MCF 10A (cell line): ENCODE measurements at regions of chr16 and their contacts with region 1.

Region 1: DNA sequence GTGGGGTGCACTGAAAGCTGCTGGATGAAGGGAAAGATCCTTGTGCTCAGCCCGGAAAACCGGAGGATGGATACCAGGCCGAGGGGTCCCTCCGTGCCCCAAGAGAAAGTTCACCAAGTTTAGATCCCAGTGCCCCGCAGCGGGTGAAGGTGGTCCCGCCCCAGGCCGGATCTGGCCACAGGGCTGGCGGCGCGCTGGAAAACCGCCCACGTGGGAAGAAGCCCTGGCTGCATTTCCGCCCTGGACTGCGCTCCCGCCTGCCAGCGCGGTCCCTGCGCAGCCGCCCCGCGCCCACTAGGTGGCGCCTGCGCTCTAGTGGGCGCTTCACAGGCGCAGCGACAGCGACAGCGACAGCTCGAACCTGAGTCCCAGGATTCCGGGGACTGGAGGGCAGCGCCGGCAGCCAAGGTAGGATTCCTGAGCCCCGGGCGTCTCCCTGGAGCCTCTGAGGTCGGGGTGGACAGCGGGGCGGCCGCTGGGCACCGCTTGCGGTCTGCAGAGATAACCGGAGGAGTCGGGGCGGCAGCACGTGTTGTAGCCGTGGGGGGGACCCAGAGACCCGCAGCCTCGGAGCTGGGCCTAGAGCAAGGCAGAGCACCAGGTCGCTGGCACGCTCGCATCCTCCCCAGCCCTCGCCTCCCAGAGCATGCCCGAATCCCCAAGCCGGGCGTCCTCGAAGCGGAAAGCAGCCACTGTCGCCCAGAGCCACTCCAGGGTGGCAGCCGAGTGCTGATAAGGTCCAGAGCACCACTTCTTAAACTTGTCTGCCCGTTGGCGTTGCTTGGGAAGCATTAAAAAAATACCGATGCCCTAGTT is at the start of gene CHD9:
- DNase-seq: peak; percentile 84
- H3K4me3 Mint-ChIP-seq: peak within 1 kb of the TSS; percentile 86
- H3K27ac Mint-ChIP-seq: peak within 1 kb of the TSS; percentile 83
- H3K4me1 Mint-ChIP-seq: peaks cover 46% of the 10 kb centered on the region
- H3K27me3 Mint-ChIP-seq: no peaks in the 10 kb centered on the region
- CTCF ChIP-seq: peak; percentile 98
- total RNA-seq, gene CHD9: 62.8 and 62.9 TPM in 2 replicates

Region 2: GRCh38 chr16:53007095-53007494 is 47.8 kb before region 1 on chr16:
- CTCF ChIA-PET with region 1: no interaction called
- POLR2A ChIA-PET with region 1: no interaction called
- intact Hi-C with region 1: no loop called
- DNase-seq: no peak
- H3K4me3 Mint-ChIP-seq: no peak overlapping the region
- H3K27ac Mint-ChIP-seq: no peak overlapping the region
- H3K4me1 Mint-ChIP-seq: no peaks in the 10 kb centered on the region
- H3K27me3 Mint-ChIP-seq: no peaks in the 10 kb centered on the region
- CTCF ChIP-seq: no peak

Region 3: GRCh38 chr16:53022374-53022773 is 32.5 kb before region 1 on chr16:
- CTCF ChIA-PET with region 1: interaction called, 3 read pairs
- POLR2A ChIA-PET with region 1: no interaction called
- intact Hi-C with region 1: loop called (anchors 1 kb)
- DNase-seq: peak; percentile 65
- H3K4me3 Mint-ChIP-seq: no peak overlapping the region
- H3K27ac Mint-ChIP-seq: no peak overlapping the region
- H3K4me1 Mint-ChIP-seq: peaks cover 7% of the 10 kb centered on the region
- H3K27me3 Mint-ChIP-seq: no peaks in the 10 kb centered on the region
- CTCF ChIP-seq: peak; percentile 74

Region 4: GRCh38 chr16:53080345-53081031 is 25.6 kb after region 1 on chr16:
- CTCF ChIA-PET with region 1: interaction called, 34 read pairs
- POLR2A ChIA-PET with region 1: interaction called, 66 read pairs
- intact Hi-C with region 1: loop called (anchors 1 kb)
- DNase-seq: peak; percentile 87
- H3K4me3 Mint-ChIP-seq: peak overlapping the region; percentile 64
- H3K27ac Mint-ChIP-seq: peak overlapping the region; percentile 84
- H3K4me1 Mint-ChIP-seq: peaks cover 63% of the 10 kb centered on the region
- H3K27me3 Mint-ChIP-seq: no peaks in the 10 kb centered on the region
- CTCF ChIP-seq: no peak

Region 5: DNA sequence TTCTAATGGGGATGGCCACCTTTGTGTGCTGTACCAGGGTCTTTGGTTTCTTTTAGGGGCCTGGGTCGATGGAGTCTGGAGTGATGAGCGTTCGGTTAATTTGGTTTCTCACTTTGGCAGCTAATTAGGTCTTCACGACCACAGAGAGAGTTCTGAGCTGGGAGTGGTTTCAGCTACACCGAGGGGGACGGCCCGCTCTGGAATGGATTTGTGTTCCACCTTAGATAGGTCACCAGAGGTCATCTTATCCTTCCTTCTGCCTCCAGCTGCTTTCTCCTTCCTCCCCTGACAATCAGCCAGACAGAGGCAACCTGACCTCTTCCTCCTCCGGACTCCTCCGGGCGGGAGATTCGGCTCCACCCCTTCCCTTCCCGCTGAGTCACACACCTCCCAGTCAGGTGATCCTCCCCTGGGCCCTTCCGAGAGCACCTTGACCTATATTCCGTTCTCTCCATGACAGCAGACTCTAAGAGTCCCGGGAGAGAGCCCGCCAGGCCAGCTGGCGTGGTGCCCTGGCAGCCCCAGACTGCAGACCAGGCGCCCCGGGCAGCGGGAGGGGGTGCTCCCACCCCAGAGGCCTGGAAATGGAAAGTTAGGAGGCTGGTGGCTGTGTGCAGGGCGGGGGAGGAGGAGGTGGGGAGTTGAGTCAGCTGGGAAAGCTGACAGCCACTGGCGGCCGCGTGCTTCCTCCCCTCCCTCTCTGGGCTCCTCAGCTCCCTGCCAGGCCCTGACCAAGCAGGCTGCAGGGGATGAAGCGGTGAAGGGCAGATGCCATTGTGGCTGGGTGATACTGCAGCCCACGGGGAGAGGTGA is 44.6 kb after region 1 on chr16:
- CTCF ChIA-PET with region 1: interaction called, 27 read pairs
- POLR2A ChIA-PET with region 1: interaction called, 61 read pairs
- intact Hi-C with region 1: loop called (anchors 1 kb)
- DNase-seq: peak; percentile 97
- H3K4me3 Mint-ChIP-seq: peak overlapping the region; percentile 68
- H3K27ac Mint-ChIP-seq: peak overlapping the region; percentile 96
- H3K4me1 Mint-ChIP-seq: peaks cover 30% of the 10 kb centered on the region
- H3K27me3 Mint-ChIP-seq: no peaks in the 10 kb centered on the region
- CTCF ChIP-seq: no peak

Region 6: GRCh38 chr16:53159781-53160436 is 105.0 kb after region 1 on chr16:
- CTCF ChIA-PET with region 1: interaction called, 22 read pairs
- POLR2A ChIA-PET with region 1: interaction called, 7 read pairs
- intact Hi-C with region 1: loop called (anchors 1 kb)
- DNase-seq: peak; percentile 65
- H3K4me3 Mint-ChIP-seq: no peak overlapping the region
- H3K27ac Mint-ChIP-seq: no peak overlapping the region
- H3K4me1 Mint-ChIP-seq: peaks cover 11% of the 10 kb centered on the region
- H3K27me3 Mint-ChIP-seq: no peaks in the 10 kb centered on the region
- CTCF ChIP-seq: peak; percentile 54

Region 7: DNA sequence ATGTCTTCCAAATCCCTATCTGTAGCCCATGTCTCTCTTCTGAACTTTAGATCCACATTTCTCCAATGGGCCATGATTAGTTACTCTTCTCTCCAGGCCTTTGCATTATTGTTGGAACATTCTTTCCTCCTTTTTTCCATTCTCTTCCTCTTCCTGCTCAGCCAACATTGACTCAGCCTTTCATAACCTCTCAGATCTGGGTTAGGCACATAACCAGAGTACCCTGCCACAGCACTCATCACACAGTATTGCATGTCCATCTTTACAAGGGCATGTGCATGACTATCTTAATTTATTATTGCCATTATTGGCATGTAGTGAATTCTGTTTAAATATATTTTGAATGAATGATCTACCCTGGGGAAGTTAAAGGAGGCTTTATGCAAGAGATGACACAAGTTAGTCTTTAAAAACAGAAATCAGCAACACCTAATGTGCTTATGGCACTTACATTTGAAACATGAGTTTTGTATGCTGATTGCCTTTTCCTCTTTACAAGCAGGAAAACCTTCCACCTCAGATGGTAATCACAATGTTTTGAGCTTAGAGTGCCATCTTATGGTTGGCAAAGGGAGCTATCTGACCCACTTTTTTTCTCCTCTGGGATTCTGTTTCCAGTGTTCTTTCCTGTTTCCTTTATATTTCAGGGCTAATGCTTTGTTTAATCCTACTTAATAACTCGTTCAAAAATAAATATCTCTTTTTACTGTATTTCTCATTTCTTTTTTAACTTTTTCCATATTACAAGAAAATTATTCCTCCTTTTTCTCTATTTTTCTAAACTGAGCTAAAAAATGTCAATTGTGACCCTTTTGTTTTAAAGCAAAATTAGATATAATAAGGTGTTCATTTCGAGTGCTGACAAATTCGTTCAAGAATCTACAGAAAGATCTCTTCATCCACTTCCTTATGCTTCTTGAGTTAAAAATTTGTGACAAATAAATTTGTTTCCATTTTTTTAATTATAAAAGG is 228.4 kb after region 1 on chr16:
- CTCF ChIA-PET with region 1: interaction called, 3 read pairs
- POLR2A ChIA-PET with region 1: no interaction called
- intact Hi-C with region 1: loop called (anchors 1 kb)
- DNase-seq: peak; percentile 60
- H3K4me3 Mint-ChIP-seq: no peak overlapping the region
- H3K27ac Mint-ChIP-seq: no peak overlapping the region
- H3K4me1 Mint-ChIP-seq: no peaks in the 10 kb centered on the region
- H3K27me3 Mint-ChIP-seq: no peaks in the 10 kb centered on the region
- CTCF ChIP-seq: peak; percentile 46